CD14-positive monocyte (primary cell): ENCODE measurements at regions of chr9 and their contacts with region 1.

Region 1: GRCh38 chr9:112299514-112299913 is 33.9 kb downstream of the PTBP3 start:
- DNase-seq: peak in 1 of 3 donors; percentile 3
- H3K4me3 ChIP-seq: no peak overlapping the region
- H3K4me3 Mint-ChIP-seq: no peak overlapping the region
- H3K27ac ChIP-seq: no peak overlapping the region
- H3K27ac Mint-ChIP-seq: peak overlapping the region in 1 of 7 donors; percentile 69
- H3K4me1 ChIP-seq: no peaks in the 10 kb centered on the region
- H3K4me1 Mint-ChIP-seq: peaks cover 19% of the 10 kb centered on the region
- H3K27me3 ChIP-seq: no peaks in the 10 kb centered on the region
- H3K27me3 Mint-ChIP-seq: peaks cover 0 to 2% (median 0%) of the 10 kb centered on the region in 3 donors
- CTCF ChIP-seq: no peak

Region 2: DNA sequence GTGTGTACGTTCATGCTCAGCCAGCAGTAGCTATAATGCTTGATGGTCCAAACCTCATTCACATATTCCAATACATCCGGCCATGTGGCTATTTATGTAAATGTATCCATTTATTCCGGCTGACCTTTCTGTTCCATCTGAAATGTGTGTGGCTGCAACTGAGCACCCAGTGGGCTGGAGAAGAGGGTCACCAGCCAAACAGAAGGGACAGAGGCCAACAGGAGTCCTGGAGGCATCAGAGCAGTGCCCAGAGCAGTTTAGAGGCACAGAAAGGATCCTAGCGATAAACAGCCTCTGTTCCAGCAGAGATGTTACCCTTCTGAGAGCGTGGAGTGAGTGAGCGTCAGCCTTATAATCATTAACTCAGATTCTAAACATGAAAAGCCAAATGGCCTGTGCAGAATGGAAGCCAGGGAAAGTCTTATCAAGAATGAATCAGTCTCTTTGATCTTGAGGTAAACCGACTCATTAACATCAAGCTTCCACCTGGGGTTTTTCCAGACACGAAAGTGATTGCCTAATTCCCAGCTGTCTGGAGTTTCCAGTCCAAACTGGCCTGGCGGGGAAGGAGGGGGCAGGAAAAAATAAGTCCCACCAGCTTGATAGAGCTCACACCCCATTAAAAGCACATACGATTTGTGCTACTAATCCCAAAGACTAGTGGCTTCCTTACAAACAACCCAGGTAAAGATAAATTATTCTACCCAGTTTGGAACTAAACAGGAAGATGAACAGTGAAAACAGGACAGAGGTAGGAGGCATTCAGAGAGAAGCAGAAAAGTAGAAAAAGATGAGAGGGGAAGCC is 180.1 kb before region 1 on chr9:
- intact Hi-C with region 1: no loop called
- DNase-seq: no peak
- H3K4me3 ChIP-seq: no peak overlapping the region
- H3K4me3 Mint-ChIP-seq: no peak overlapping the region
- H3K27ac ChIP-seq: no peak overlapping the region
- H3K27ac Mint-ChIP-seq: peak overlapping the region in 2 of 7 donors; percentile 6 to 41
- H3K4me1 ChIP-seq: no peaks in the 10 kb centered on the region
- H3K4me1 Mint-ChIP-seq: no peaks in the 10 kb centered on the region
- H3K27me3 ChIP-seq: no peaks in the 10 kb centered on the region
- H3K27me3 Mint-ChIP-seq: no peaks in the 10 kb centered on the region
- CTCF ChIP-seq: no peak

Region 3: GRCh38 chr9:112248722-112249121 is 50.8 kb before region 1 on chr9:
- intact Hi-C with region 1: no loop called
- DNase-seq: no peak
- H3K4me3 ChIP-seq: no peak overlapping the region
- H3K4me3 Mint-ChIP-seq: no peak overlapping the region
- H3K27ac ChIP-seq: no peak overlapping the region
- H3K27ac Mint-ChIP-seq: peak overlapping the region in 1 of 7 donors; percentile 48
- H3K4me1 ChIP-seq: no peaks in the 10 kb centered on the region
- H3K4me1 Mint-ChIP-seq: peaks cover 2% of the 10 kb centered on the region
- H3K27me3 ChIP-seq: no peaks in the 10 kb centered on the region
- H3K27me3 Mint-ChIP-seq: no peaks in the 10 kb centered on the region
- CTCF ChIP-seq: no peak

Region 4: GRCh38 chr9:112355427-112355897 is 55.9 kb after region 1 on chr9:
- intact Hi-C with region 1: loop called in 1 of 2 experiments (anchors 10 kb)
- DNase-seq: no peak
- H3K4me3 ChIP-seq: no peak overlapping the region
- H3K4me3 Mint-ChIP-seq: no peak overlapping the region
- H3K27ac ChIP-seq: no peak overlapping the region
- H3K27ac Mint-ChIP-seq: no peak overlapping the region
- H3K4me1 ChIP-seq: peaks cover 0 to 4% of the 10 kb centered on the region in 2 donors
- H3K4me1 Mint-ChIP-seq: peaks cover 12% of the 10 kb centered on the region
- H3K27me3 ChIP-seq: no peaks in the 10 kb centered on the region
- H3K27me3 Mint-ChIP-seq: peaks cover 0 to 8% (median 0%) of the 10 kb centered on the region in 3 donors
- CTCF ChIP-seq: no peak